ENCODE measurements at regions of chr19 and their contacts with region 1.

Region 1: DNA sequence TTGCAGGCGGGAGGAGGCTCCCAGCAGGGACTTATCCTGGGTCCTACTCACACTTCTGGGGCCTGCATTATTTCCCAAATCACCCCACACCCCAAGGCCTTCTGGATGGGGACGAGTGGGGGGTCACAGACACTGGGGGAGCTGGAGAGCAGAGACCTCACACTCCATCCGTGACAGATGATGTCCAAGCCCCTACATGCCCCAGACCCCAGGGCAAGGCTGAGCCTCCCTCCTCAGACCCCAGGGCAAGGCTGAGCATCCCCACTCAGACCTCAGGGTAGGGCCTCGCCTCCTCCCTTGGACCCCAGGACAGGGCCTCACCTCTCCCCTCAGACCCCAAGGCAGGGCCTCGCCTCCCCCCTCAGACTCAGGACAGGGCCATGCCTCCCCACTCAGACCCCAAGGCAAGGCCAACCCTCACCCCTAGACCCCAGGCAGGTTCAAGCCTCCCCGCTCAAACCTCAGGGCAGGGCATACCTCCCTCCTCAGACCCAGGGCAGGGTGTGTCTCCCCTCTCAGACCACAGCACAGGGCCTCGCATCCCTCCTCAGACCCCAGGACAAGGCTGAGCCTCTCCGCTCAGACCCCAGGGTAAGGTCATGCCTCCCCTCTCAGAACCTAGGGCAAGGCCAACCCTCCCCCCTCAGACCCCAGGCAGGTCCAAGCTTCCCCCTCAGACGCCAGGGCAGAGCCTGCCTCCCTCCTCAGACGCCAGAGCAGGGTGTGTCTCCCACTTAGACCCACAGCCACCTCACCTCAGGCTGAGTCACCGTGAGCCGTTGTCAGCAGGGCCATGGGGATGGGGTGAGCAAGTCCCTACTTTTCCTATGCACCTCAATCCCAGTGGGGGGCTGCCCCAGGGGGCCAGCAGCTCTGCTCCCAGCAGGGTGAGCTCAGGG is 1.7 kb upstream of the S1PR4 start:
- DNase-seq: peak; percentile 62
- H3K4me3 Mint-ChIP-seq: peak overlapping the region; percentile 87
- H3K27ac Mint-ChIP-seq: peak overlapping the region; percentile 90
- H3K4me1 Mint-ChIP-seq: peaks cover 26% of the 10 kb centered on the region
- H3K27me3 Mint-ChIP-seq: peaks cover 2% of the 10 kb centered on the region

Region 2: DNA sequence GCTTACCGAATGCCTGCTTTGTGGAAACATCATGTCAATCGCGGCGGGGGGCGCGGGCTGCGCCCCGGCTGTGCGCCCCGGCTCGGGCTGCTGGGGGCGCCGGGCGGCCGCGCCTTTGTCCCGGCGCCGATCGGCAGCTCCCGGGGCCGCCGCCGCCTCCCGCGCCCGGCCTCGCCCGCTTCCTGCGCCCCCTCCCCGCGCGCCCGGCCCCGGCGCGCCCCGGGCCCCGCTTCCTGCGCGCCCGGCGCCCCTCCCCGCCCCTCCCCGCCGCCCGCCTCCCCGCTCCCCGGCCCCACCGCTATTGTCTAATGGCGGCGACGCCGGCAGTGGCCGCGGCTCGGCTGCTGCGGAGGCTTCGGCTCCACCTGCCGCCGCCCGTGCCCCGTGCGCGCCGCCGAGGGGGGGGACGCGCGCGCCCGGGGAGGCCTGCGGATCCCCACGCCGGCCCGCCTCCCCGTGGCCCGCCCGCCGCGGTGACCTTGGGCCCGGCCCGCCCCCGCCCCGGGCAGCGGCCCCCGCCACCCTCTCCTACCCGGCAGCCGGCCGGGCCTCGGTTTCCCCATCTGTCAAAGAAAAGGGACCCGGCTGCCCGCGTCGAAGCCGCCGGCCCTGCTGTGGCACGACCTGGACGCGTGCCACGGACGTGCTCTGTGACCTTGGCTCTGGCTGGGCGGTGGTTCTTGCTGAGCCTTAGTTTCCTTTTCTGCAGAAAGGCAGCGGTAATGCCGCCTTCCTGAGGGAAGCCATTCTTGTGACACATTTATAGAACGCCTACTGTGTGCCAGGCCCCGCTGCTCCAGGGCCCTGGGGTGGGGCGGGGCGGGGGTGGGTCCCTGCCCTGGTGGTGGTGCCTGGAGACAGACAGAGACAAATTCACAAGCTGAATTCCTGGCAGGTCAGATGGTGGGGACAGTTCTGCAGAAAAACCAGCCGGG is 114.4 kb before region 1 on chr19 and contains the start of gene TLE5:
- intact Hi-C with region 1: loop called (anchors 5 kb)
- DNase-seq: peak; percentile 68
- H3K4me3 Mint-ChIP-seq: peak within 1 kb of the TSS; percentile 91
- H3K27ac Mint-ChIP-seq: peak within 1 kb of the TSS; percentile 99
- H3K4me1 Mint-ChIP-seq: peaks cover 20% of the 10 kb centered on the region
- H3K27me3 Mint-ChIP-seq: no peaks in the 10 kb centered on the region
- total RNA-seq, gene TLE5: 378 and 399 TPM in 2 replicates

Region 3: GRCh38 chr19:3140667-3141038 is 36.2 kb before region 1 on chr19:
- intact Hi-C with region 1: loop called (anchors 1 kb)
- DNase-seq: no peak
- H3K4me3 Mint-ChIP-seq: peak overlapping the region; percentile 72
- H3K27ac Mint-ChIP-seq: peak overlapping the region; percentile 83
- H3K4me1 Mint-ChIP-seq: peaks cover 33% of the 10 kb centered on the region
- H3K27me3 Mint-ChIP-seq: no peaks in the 10 kb centered on the region

Region 4: GRCh38 chr19:3154957-3155736 is 21.7 kb before region 1 on chr19:
- intact Hi-C with region 1: loop called (anchors 1 kb)
- DNase-seq: peak; percentile 84
- H3K4me3 Mint-ChIP-seq: no peak overlapping the region
- H3K27ac Mint-ChIP-seq: no peak overlapping the region
- H3K4me1 Mint-ChIP-seq: peaks cover 17% of the 10 kb centered on the region
- H3K27me3 Mint-ChIP-seq: no peaks in the 10 kb centered on the region

Region 5: DNA sequence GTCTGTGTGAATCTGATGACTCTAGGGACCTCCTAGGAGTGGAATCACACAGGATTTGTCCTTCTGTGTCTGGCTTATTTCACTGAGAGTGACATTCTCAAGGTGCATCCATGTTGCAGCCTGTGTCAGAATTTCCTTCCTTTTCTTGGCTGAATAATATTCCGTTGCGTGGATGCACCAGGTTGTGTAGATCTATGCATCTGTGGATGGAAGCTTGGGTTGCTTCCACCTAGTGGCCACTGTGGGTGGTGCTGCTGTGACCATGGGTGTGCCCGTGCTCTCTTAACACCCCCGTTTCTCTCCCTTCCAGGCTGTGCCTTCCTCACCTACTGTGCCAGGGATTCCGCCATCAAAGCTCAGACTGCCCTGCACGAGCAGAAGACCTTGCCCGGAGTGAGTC is 73.8 kb after region 1 on chr19:
- intact Hi-C with region 1: no loop called
- DNase-seq: peak; percentile 4
- H3K4me3 Mint-ChIP-seq: no peak overlapping the region
- H3K27ac Mint-ChIP-seq: no peak overlapping the region
- H3K4me1 Mint-ChIP-seq: no peaks in the 10 kb centered on the region
- H3K27me3 Mint-ChIP-seq: no peaks in the 10 kb centered on the region

Region 6: GRCh38 chr19:3516675-3517207 is 339.9 kb after region 1 on chr19:
- intact Hi-C with region 1: no loop called
- DNase-seq: no peak
- H3K4me3 Mint-ChIP-seq: no peak overlapping the region
- H3K27ac Mint-ChIP-seq: no peak overlapping the region
- H3K4me1 Mint-ChIP-seq: peaks cover 9% of the 10 kb centered on the region
- H3K27me3 Mint-ChIP-seq: no peaks in the 10 kb centered on the region

Measured in activated T-helper 1 cell treated with anti-CD3 and anti-CD28 coated beads, Interleukin-12 subunit alpha, Interleukin-12 subunit beta, Interleukin-2, Interleukin-4 antibody, amounts not matched to agents 30 ng/mL and 10 ng/mL and 1 ng/mL, durations not matched to agents 14 hours and 24 hours and 36 hours (primary cell).